Activated CD4-positive, alpha-beta memory T cell treated with anti-CD3 and anti-CD28 coated beads for 36 hours (primary cell): ENCODE measurements at regions of chr4 and their contacts with region 1.

Region 1: DNA sequence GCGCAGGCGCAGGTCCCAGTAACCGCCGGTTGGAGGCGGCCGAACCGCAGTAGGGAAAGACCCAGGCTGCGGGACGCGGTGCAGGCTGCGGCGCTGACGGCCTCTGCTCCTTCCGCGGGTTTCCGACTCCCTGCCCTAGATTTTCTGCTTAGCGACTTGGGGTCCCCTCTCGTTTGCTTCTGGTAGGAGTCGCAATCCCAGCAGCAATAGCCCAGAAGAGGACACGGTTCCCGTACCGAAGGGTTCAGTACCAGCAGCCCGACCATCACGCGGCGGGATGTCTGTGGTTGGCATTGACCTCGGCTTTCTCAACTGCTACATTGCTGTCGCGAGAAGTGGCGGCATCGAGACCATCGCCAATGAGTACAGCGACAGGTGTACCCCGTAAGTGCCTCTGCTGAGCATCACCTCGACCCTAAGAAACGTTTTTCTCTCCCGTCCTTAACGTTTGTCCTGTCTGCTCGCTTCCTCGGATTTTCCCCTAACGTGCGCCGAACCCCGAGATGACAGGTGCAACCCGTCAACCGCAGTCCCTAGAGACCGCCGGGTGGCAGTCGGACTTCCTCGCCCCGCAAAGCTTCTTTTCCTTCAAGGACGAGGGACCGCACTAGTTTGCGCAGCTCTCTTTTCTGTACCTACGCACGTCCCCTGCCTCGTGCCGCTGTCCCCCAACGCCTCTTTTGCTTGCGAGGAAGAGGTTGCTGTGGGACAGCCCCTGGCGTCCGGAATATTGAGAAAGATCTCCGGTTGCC is at the start of gene HSPA4L:
- DNase-seq: no peak
- H3K4me3 Mint-ChIP-seq: peak within 1 kb of the TSS; percentile 79
- H3K27ac Mint-ChIP-seq: peak within 1 kb of the TSS; percentile 49
- H3K4me1 Mint-ChIP-seq: peaks cover 18% of the 10 kb centered on the region
- H3K27me3 Mint-ChIP-seq: peaks cover 51% of the 10 kb centered on the region
- total RNA-seq, gene HSPA4L: 1.9 to 3.0 TPM

Region 2: DNA sequence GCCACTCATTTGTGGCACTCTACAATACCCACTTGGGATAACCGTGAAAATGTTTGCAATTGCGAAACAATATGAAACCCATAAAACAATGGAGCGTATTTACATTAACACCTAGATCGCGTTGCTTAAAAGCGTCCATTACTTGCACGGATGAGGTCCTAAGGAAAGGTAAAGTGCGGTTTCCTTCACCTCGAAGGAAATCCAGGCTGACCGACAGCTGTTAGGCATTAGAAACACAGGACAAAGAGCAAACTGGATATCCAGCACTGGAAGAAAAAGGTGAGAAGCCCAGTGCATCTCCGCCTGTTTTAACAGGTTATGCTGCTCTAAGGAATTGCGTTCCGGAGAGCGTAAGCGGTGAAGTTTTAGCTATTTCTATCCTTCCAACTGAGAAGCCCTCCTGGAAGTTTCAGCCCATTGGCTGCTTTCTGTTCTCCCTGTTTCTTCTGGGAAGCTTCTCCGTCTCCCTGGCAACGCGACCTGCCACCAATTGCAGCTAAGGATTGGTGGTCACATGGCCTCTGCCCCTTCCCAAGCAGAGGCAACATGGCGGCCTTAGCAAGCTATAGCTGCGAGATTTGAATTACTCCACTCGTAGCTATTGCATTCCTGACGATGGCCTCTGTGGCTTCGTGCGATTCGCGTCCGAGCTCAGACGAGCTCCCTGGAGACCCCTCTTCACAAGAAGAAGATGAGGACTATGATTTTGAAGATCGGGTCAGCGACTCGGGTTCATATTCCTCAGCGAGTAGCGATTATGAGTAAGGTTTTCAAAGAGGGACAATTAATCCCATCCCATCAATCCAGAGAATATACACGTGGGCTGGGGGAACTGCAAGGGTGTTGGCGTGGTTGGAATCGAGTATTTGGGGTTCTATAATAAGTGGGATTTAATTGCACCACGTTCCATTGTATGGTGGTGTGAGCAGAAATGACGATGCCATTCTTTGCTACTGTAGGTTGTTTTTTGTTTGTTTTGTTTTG is 149.7 kb before region 1 on chr4 and contains the start of gene INTU:
- CTCF ChIA-PET with region 1: no interaction called
- POLR2A ChIA-PET with region 1: no interaction called
- intact Hi-C with region 1: loop called (anchors 2 kb)
- DNase-seq: peak; percentile 60
- H3K4me3 Mint-ChIP-seq: peak within 1 kb of the TSS; percentile 68
- H3K27ac Mint-ChIP-seq: no peak within 1 kb of the TSS
- H3K4me1 Mint-ChIP-seq: peaks cover 8% of the 10 kb centered on the region
- H3K27me3 Mint-ChIP-seq: peaks cover 27% of the 10 kb centered on the region
- total RNA-seq, gene INTU: 0.19 to 0.48 TPM

Region 3: DNA sequence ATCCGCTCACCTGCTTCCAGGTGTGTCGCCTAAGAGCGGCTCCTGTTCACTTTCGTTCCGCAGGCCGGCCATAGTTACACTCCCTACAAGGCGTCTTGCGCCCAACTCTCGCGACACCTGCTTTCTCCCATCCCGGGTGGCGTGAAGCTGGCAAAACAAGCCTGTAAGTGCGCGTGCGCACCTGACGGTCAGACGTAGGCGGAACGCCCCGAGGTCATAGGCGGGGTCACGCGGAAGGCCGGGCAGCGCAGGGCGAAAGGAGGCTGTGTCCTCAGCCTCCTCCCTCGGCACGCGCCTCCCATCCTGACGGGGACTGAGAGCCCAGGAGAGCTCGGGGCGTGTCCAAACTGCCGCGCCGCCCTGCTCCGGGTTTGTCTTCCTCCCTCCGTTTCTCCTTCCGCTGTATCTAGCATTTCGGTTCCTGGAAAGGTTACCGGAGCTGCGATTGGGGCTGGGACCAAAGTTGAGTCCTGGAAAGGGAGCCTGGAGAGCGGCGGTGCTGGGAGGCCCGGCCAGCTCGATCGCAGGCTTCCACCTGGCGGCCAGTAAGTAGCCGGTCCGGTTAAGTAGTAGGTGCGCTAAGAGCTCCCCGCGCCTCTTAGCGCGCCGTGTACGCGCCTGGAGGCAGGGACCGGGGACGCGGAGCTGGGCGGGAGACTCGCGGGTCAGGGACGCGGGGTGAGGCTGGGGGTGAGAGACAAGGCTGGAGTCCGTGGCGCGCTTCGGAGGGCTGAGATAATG is 182.8 kb after region 1 on chr4 and contains the starts of genes ABHD18 and MFSD8:
- CTCF ChIA-PET with region 1: interaction called, 4 read pairs
- POLR2A ChIA-PET with region 1: interaction called, 6 read pairs
- intact Hi-C with region 1: loop called (anchors 1 kb)
- DNase-seq: peak; percentile 100
- H3K4me3 Mint-ChIP-seq: peak within 1 kb of the TSS; percentile 94
- H3K27ac Mint-ChIP-seq: peak within 1 kb of the TSS; percentile 95
- H3K4me1 Mint-ChIP-seq: peaks cover 38% of the 10 kb centered on the region
- H3K27me3 Mint-ChIP-seq: no peaks in the 10 kb centered on the region
- total RNA-seq, gene ABHD18: 17.3 to 18.9 TPM
- total RNA-seq, gene MFSD8: 13.0 to 15.3 TPM

Region 4: DNA sequence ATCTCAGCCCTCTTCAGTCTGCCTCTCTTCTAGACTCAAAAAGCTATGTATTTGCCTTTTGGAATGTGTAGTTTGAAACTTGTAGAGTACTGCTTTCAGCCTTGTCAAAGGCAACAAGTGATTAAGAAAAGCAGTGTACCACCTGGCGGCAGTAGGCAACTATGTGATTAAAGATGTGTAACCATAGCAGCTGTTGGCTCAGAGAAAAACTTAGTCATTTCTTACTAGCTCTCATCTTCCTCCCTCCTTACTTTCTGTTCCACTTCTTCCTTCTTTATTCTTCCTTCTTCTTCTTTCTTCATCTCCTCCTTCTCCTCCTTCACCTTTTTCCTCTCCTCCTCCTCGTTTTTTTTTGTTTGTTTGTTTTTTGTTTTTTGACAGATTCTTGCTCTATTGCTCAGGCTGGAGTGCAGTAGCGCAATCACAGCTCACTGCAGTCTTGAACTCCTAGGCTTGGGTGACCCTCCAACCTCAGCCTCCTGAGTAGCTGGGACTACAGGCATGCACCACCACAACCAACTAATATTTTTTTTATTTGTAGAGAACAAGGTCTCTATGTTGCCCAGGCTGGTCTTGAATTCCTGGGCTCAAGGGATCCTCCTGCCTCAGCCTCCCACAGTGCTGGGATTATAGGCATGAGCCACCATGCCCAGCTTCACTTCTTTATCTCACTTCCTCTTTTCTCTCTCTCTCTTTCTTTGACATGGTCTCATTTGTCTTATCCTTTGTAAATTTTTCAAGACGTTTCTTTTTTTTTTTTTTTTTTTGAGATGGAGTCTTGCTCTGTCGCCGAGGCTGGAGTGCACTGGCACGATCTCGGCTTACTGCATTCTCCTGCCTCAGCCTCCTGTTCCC is 215.3 kb after region 1 on chr4:
- CTCF ChIA-PET with region 1: no interaction called
- POLR2A ChIA-PET with region 1: no interaction called
- intact Hi-C with region 1: loop called (anchors 2 kb)
- DNase-seq: peak; percentile 60
- H3K4me3 Mint-ChIP-seq: no peak overlapping the region
- H3K27ac Mint-ChIP-seq: peak overlapping the region; percentile 36
- H3K4me1 Mint-ChIP-seq: peaks cover 22% of the 10 kb centered on the region
- H3K27me3 Mint-ChIP-seq: no peaks in the 10 kb centered on the region

Region 5: DNA sequence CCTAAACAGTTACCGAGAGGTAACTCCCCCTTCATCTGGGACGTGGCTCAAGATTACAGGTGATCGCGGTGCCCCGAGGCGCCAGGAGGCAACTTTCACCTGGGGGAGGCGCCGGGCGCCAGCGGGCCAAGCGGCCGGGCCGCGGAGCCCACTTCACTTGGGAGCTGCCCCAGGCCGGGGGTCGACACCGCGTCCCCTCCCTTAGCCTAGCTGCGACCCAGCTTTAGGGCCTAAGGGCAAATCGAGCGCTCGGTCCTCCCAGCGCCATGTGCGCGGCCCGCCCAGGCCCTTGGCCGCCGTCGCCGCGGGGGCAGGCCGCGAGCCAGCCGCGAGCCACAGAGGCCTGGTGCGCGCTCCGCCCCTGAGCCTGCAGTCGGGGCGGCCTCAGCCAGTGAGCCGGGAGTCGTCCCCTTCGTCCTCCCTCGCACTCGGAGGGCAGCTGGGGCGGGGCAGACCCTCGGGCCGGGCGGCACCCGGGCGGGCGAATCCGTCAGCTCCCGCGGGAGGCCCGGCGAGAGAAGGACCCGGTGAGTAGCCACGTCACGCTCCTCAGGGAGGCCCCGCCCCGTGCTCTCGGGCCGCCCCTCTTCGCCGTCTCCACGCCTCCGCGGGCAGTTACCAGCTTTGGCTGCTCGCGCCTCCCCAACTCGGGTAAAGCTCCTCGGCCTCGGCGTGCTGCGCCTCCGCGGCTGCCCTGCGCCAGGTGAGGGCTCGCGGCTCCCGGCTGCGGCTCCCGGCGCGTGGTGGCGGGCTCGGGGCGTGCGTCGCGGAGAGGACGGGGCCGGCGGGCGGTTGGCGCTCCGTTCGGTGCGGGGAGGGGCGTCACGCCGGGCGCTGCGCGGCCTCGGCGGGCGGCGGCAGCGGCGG is 278.5 kb after region 1 on chr4 and contains the start of gene LARP1B:
- CTCF ChIA-PET with region 1: interaction called, 3 read pairs
- POLR2A ChIA-PET with region 1: no interaction called
- intact Hi-C with region 1: loop called (anchors 2 kb)
- DNase-seq: peak; percentile 95
- H3K4me3 Mint-ChIP-seq: peak within 1 kb of the TSS; percentile 87
- H3K27ac Mint-ChIP-seq: peak within 1 kb of the TSS; percentile 87
- H3K4me1 Mint-ChIP-seq: peaks cover 15% of the 10 kb centered on the region
- H3K27me3 Mint-ChIP-seq: no peaks in the 10 kb centered on the region
- total RNA-seq, gene LARP1B: 23.5 to 25.5 TPM